AG04449 (cell line): ENCODE measurements at regions of chr5 and their contacts with region 1.

Region 1: GRCh38 chr5:150129813-150130492 is 25.7 kb downstream of the PDGFRB start:
- DNase-seq: no peak
- H3K4me3 ChIP-seq: no peak overlapping the region
- CTCF ChIP-seq: peak; percentile 95

Region 2: GRCh38 chr5:149656576-149657182 is 473.3 kb before region 1 on chr5:
- CTCF ChIA-PET with region 1: no interaction called
- POLR2A ChIA-PET with region 1: no interaction called
- DNase-seq: no peak
- H3K4me3 ChIP-seq: no peak overlapping the region
- CTCF ChIP-seq: peak; percentile 17

Region 3: GRCh38 chr5:150112261-150113046 is 17.5 kb before region 1 on chr5:
- CTCF ChIA-PET with region 1: interaction called, 17 read pairs
- POLR2A ChIA-PET with region 1: no interaction called
- DNase-seq: peak; percentile 56
- H3K4me3 ChIP-seq: no peak overlapping the region
- CTCF ChIP-seq: no peak

Region 4: DNA sequence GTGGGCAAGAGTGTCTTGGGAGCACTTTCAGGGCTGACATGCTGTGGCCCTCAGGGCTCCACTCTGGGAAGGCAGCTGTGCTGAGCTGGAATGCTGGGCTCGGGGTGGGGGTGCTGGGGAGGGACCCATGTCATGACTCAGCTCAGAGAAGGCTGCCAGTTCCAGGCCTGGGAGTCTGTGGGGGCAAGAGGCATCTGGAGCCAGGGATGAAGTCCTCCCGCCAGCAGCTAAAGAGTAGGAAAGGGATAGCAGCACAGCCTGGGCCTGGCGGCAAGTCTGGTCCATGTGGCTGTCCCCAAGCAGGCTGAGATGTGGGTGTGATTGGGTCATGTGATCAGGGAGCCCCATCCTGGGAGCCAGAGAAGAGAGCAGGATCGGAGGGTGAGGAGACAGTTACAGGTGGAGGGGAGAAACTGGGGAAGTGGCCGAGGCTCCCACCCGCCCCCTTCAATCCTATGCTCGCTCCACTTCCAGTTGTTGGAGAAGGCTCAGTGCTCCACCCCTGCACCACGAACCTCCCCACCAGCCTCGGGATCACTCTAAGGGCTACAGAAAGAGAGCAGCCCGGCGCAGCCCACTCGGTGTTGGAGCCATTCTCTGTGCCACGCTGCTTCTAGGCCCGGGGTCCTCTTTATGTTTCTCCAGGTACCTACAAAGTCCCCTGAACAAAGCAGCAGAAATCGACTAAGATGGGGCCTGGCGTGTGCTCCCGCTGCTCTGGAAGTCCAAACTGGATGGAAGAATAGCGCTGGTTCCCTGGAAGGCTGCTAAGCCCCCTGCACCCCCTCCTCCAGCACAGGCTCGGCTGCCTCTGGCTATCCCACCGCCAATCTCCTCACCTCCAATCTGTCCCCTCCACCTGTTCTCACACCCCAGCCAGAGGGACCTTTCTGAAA is 13.6 kb after region 1 on chr5:
- CTCF ChIA-PET with region 1: interaction called, 52 read pairs
- POLR2A ChIA-PET with region 1: interaction called, 9 read pairs
- DNase-seq: no peak
- H3K4me3 ChIP-seq: peak overlapping the region; percentile 23
- CTCF ChIP-seq: no peak

Region 5: DNA sequence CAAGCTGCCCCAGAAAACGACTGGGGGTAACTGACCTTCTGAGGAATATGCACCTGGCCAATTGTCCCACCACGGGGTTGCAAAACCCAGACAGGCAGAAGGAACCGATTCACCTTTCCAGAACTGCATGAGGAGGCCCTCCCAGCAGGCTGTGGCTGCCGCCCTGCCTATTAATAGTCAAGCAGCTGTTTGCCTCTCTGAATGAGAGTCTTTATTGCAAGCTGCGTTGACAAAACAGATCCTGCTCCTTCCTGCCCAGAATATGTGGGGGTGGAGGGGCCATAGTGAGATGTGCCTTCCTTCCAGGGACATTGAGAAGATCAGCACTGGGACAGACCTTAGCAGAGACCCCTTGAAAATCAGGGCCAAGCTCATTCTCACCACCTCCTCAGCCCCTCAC is 209.2 kb after region 1 on chr5:
- CTCF ChIA-PET with region 1: no interaction called
- POLR2A ChIA-PET with region 1: no interaction called
- DNase-seq: no peak
- H3K4me3 ChIP-seq: no peak overlapping the region
- CTCF ChIP-seq: no peak